CD4-positive, alpha-beta T cell (primary cell): ENCODE measurements at regions of chr22 and their contacts with region 1.

Region 1: GRCh38 chr22:29387921-29388758 is at the start of gene AP1B1:
- DNase-seq: peak; percentile 79 to 96 (median 92)
- ATAC-seq: peak; percentile 91
- H3K4me3 ChIP-seq: peak within 1 kb of the TSS; percentile 91
- H3K4me3 Mint-ChIP-seq: peak within 1 kb of the TSS; percentile 96
- H3K27ac ChIP-seq: peak within 1 kb of the TSS; percentile 58 to 80
- H3K27ac Mint-ChIP-seq: peak within 1 kb of the TSS; percentile 85
- H3K4me1 ChIP-seq: peaks cover 48% of the 10 kb centered on the region
- H3K4me1 Mint-ChIP-seq: peaks cover 52% of the 10 kb centered on the region
- H3K27me3 ChIP-seq: no peaks in the 10 kb centered on the region
- H3K27me3 Mint-ChIP-seq: no peaks in the 10 kb centered on the region
- CTCF ChIP-seq: no peak
- total RNA-seq, gene AP1B1: 25.6 to 26.4 TPM

Region 2: GRCh38 chr22:28488825-28489224 is 899.3 kb before region 1 on chr22:
- CTCF ChIA-PET with region 1: no interaction called
- POLR2A ChIA-PET with region 1: no interaction called
- intact Hi-C with region 1: no loop called
- DNase-seq: no peak
- ATAC-seq: no peak
- H3K4me3 ChIP-seq: no peak overlapping the region
- H3K4me3 Mint-ChIP-seq: no peak overlapping the region
- H3K27ac ChIP-seq: no peak overlapping the region
- H3K27ac Mint-ChIP-seq: no peak overlapping the region
- H3K4me1 ChIP-seq: no peaks in the 10 kb centered on the region
- H3K4me1 Mint-ChIP-seq: no peaks in the 10 kb centered on the region
- H3K27me3 ChIP-seq: peaks cover 0 to 8% of the 10 kb centered on the region in 2 experiments
- H3K27me3 Mint-ChIP-seq: peaks cover 24% of the 10 kb centered on the region
- CTCF ChIP-seq: no peak

Region 3: DNA sequence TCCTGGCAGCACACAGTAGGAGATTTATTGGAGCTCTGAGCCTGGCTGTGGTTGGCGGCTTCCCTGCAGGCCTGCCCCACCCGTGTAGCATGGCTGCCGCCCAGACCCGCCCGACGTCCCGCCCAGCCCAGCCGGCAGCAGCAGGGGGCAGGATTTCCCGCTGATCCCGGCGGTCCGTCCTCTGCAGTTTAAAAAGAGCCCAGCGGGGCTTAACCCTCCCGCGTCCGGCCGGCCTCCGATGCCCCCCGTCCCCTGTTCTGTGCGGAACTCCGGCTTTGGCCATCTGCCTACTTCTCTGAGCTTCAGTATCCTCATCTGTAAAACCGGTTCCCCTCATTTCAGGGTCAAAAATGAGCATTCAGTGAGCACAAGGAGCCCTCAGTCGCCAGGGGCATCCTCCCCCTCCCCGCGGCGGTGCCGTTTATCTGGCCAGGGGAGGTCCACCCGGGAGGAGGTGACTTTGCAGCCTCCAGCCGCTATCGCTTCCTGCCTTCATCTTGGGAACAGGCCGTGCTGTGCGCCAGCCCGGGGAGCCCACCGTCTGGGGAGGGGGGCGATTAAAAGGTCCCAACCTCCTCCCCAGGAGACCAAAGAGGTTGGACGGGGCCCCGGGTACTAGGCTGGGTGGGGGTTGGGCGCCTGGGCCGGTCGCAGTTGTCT is 81.8 kb before region 1 on chr22 and contains the start of gene GAS2L1:
- CTCF ChIA-PET with region 1: no interaction called
- POLR2A ChIA-PET with region 1: no interaction called
- intact Hi-C with region 1: loop called in 1 of 2 experiments (anchors 2 kb)
- DNase-seq: peak in 9 of 14 experiments; percentile 13 to 67 (median 44)
- ATAC-seq: peak; percentile 51
- H3K4me3 ChIP-seq: peak within 1 kb of the TSS; percentile 65
- H3K4me3 Mint-ChIP-seq: peak within 1 kb of the TSS; percentile 85
- H3K27ac ChIP-seq: no peak within 1 kb of the TSS
- H3K27ac Mint-ChIP-seq: no peak within 1 kb of the TSS
- H3K4me1 ChIP-seq: peaks cover 50% of the 10 kb centered on the region
- H3K4me1 Mint-ChIP-seq: peaks cover 12% of the 10 kb centered on the region
- H3K27me3 ChIP-seq: peaks cover 12 to 15% of the 10 kb centered on the region in 2 experiments
- H3K27me3 Mint-ChIP-seq: peaks cover 20% of the 10 kb centered on the region
- CTCF ChIP-seq: no peak
- total RNA-seq, gene GAS2L1: 0.28 to 0.77 TPM